OCI-LY7 (cell line): ENCODE measurements at regions of chr6 and their contacts with region 1.

Region 1: DNA sequence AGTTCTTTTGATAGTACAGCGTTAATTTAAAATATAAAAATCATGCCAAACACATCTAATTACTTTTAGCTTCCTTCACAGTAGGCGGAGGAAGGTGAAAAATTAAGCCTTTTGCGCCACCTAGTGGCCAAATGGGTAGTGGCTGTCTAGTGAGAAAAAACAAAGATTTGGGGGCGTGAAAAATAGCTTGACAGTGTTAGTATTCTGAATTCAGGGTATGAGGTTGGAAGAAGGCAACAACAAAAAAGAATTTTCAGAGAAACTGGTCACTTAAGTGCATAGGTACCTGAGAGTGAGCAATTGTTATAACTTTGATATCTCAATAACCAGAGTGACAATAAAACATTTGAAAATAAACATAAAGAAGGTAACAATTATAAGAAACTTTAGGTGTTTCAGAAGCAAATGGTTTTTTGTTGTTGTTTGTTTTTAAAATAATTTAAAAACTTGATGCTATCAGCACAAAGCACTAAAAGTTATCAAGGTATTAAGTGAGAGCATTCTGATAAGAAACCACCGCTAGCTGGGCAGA is 14.3 kb downstream of the PSMB9 start:
- DNase-seq: peak; percentile 90
- H3K4me3 ChIP-seq: peak overlapping the region; percentile 51
- H3K27ac ChIP-seq: peak overlapping the region; percentile 94
- H3K4me1 ChIP-seq: peaks cover 45% of the 10 kb centered on the region
- CTCF ChIP-seq: peak; percentile 99

Region 2: DNA sequence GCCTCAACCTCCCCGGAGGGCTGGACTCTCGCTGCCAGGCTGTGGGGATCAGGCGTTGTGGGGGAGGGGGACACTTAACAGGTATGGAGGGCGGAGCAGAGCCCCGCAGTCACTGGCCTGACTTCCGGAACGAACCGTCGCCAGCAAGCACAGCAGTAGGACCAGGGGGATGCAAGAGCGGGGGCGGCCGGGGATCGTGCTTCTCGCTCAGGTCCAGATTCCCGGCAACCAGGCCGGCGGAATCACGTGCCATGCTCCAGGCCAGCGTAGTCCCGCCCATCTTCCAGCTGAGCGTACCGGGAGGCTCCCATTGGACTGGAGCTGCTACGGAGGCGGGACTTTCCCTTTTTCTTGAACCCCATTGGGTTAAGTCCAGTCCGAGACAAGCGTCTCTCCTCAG is 1687.8 kb before region 1 on chr6:
- CTCF ChIA-PET with region 1: no interaction called
- POLR2A ChIA-PET with region 1: no interaction called
- intact Hi-C with region 1: no loop called
- DNase-seq: peak; percentile 86
- H3K4me3 ChIP-seq: peak overlapping the region; percentile 64
- H3K27ac ChIP-seq: no peak overlapping the region
- H3K4me1 ChIP-seq: peaks cover 21% of the 10 kb centered on the region
- CTCF ChIP-seq: no peak

Region 3: DNA sequence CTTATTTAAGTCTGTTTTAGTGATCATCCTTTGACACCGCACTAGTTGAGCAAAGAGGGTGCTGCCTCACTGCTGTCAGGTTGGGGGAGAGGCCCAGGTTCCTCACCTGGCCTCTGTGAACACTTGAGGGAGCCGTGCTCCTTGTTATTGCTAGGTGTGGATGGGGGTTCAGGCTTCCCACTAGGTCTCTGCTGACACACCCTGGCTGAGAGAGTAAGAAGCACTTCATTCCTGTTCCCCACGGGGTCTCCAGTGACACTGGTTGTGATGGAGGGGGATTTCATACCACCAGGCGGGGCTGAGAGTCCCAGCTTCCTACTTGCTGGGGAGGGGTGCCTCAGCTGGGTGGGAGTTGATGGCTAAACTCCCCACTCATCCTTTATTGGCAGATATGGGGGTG is 633.4 kb before region 1 on chr6:
- CTCF ChIA-PET with region 1: no interaction called
- POLR2A ChIA-PET with region 1: no interaction called
- intact Hi-C with region 1: loop called (anchors 10 kb)
- DNase-seq: peak; percentile 53
- H3K4me3 ChIP-seq: no peak overlapping the region
- H3K27ac ChIP-seq: no peak overlapping the region
- H3K4me1 ChIP-seq: peaks cover 5% of the 10 kb centered on the region
- CTCF ChIP-seq: peak; percentile 69

Region 4: DNA sequence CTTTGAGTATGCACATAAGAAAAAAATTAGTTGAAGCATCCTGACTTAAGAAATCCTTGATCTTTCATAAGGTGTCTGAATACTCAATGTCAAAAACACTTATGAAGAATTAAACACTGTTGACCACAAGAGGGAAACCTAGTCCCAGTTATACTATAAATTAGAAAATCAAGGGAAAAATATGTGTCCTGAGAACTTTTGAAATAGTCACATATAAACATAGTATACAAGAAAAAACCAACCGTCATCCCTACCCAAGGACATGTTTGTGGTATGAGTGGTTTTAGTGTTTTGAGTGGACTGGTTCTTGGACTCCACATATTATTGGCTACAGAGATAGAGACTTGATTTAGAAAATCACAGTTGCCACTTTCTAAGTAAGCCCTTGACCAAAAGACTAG is 436.3 kb before region 1 on chr6:
- CTCF ChIA-PET with region 1: no interaction called
- POLR2A ChIA-PET with region 1: no interaction called
- intact Hi-C with region 1: loop called (anchors 2 kb)
- DNase-seq: peak; percentile 75
- H3K4me3 ChIP-seq: no peak overlapping the region
- H3K27ac ChIP-seq: no peak overlapping the region
- H3K4me1 ChIP-seq: peaks cover 24% of the 10 kb centered on the region
- CTCF ChIP-seq: peak; percentile 93

Region 5: GRCh38 chr6:32700391-32701040 is 167.8 kb before region 1 on chr6:
- CTCF ChIA-PET with region 1: no interaction called
- POLR2A ChIA-PET with region 1: no interaction called
- intact Hi-C with region 1: loop called (anchors 2 kb)
- DNase-seq: peak; percentile 70
- H3K4me3 ChIP-seq: no peak overlapping the region
- H3K27ac ChIP-seq: no peak overlapping the region
- H3K4me1 ChIP-seq: peaks cover 6% of the 10 kb centered on the region
- CTCF ChIP-seq: peak; percentile 95

Region 6: DNA sequence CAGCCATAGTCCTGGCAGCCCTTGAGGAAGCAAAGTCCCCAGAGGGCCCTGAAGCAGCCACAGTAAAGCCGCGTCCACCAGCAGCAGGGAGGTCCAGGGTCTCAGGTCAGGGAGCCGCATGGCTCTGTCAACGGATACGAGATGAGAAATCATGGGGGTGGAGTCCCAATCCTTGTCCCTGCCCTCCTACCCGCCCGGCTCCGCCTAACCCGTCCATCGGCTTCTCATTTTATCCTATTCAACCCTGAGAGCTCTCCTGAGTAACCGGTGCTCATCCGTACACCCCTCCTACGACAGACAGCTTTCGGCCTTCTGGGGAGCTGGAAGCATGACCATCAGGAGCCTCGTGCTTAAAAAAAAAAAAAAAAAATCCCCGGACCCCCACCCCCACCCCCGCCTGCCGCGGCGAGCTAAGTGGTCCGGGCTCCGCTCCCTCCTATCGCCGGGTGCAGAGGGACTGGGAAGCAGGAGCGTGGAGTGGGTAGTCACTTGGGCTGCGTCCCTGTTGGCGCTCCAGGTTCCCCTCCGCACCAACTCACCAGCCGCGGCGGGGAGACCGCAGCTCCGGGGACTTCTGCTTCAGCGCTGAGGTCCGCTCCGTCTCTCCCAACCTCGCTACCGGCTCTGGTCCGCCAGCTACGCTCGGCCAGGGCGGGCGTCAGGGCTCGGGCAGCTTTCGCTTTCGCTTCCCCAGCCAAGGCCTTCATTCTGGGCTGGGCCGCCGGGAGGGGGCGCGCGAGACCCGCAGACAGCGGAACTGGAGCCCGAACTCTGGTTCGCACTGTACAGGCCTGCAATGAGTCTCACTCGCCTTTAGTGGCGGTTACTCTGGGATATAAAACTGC is 30.0 kb before region 1 on chr6 and contains the start of gene TAP2:
- CTCF ChIA-PET with region 1: interaction called, 35 read pairs
- POLR2A ChIA-PET with region 1: interaction called, 22 read pairs
- intact Hi-C with region 1: loop called (anchors 1 kb)
- DNase-seq: peak; percentile 96
- H3K4me3 ChIP-seq: peak within 1 kb of the TSS; percentile 97
- H3K27ac ChIP-seq: peak within 1 kb of the TSS; percentile 67
- H3K4me1 ChIP-seq: peaks cover 55% of the 10 kb centered on the region
- CTCF ChIP-seq: peak; percentile 95
- total RNA-seq, gene TAP2: 90.9 and 96.4 TPM in 2 replicates

Region 7: GRCh38 chr6:32853541-32854375 is 14.6 kb before region 1 on chr6 and contains the starts of genes PSMB9 and TAP1:
- CTCF ChIA-PET with region 1: interaction called, 10 read pairs
- POLR2A ChIA-PET with region 1: interaction called, 15 read pairs
- intact Hi-C with region 1: loop called (anchors 1 kb)
- DNase-seq: peak; percentile 94
- H3K4me3 ChIP-seq: peak within 1 kb of the TSS; percentile 83
- H3K27ac ChIP-seq: peak within 1 kb of the TSS; percentile 83
- H3K4me1 ChIP-seq: peaks cover 58% of the 10 kb centered on the region
- CTCF ChIP-seq: peak; percentile 81
- total RNA-seq, gene PSMB9: 149 and 158 TPM in 2 replicates
- total RNA-seq, gene TAP1: 62.1 and 85.9 TPM in 2 replicates